ENCODE measurements at regions of chr12 and their contacts with region 1.

Region 1: DNA sequence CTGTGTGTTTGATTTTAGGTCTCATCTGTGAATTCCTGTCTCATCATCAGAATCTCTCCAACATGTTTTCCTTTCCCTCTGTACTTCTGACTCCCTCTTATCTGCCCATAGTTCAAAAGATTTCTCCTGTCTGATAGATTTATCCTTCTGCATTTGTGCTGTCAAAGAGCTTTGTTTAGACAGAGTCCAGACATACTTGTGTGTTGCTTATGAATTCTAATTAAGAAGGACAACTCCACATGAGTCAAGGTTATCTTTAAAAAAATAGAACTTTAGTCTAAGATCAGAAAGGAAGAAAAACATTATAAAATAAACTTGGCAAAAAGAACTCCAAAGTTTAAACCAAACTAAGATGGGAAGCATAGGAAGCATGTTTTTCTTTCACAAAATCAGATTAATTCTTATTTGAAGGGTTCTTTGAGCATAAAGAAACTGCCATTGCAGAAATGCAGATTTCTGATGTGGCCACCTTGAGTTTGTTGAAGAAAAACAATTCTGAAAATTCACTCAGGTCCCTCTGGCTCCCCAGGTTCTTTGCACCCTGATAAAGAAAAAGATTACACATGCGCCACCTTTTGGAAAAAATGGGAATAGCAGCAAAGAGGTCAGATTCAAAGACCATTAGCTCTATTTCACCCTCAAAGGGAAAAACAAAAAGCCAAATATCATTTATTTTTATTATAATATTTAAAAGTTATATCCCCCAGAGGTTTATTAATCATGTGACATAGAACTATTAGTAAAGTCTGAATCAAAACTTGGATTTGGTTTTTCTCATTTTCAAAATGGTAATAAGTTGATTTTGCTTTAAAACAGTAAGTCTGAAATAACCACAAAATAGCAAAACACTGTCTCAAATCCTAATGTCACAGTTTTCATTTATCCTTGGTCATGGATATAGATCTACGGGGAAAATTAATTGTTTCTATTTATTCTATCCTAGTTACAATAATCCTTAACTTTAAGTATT is 143.7 kb upstream of the DCN start:
- DNase-seq: no peak
- H3K4me3 ChIP-seq: no peak overlapping the region
- H3K27ac ChIP-seq: peak overlapping the region; percentile 59
- H3K4me1 ChIP-seq: no peaks in the 10 kb centered on the region
- H3K27me3 ChIP-seq: no peaks in the 10 kb centered on the region
- CTCF ChIP-seq: peak; percentile 79

Region 2: GRCh38 chr12:91180582-91181395 is 145.6 kb before region 1 on chr12:
- intact Hi-C with region 1: loop called (anchors 10 kb)
- DNase-seq: no peak
- H3K4me3 ChIP-seq: peak overlapping the region; percentile 56
- H3K27ac ChIP-seq: peak overlapping the region; percentile 85
- H3K4me1 ChIP-seq: no peaks in the 10 kb centered on the region
- H3K27me3 ChIP-seq: no peaks in the 10 kb centered on the region
- CTCF ChIP-seq: no peak